ENCODE measurements at regions of chr15 and their contacts with region 1.

Region 1: DNA sequence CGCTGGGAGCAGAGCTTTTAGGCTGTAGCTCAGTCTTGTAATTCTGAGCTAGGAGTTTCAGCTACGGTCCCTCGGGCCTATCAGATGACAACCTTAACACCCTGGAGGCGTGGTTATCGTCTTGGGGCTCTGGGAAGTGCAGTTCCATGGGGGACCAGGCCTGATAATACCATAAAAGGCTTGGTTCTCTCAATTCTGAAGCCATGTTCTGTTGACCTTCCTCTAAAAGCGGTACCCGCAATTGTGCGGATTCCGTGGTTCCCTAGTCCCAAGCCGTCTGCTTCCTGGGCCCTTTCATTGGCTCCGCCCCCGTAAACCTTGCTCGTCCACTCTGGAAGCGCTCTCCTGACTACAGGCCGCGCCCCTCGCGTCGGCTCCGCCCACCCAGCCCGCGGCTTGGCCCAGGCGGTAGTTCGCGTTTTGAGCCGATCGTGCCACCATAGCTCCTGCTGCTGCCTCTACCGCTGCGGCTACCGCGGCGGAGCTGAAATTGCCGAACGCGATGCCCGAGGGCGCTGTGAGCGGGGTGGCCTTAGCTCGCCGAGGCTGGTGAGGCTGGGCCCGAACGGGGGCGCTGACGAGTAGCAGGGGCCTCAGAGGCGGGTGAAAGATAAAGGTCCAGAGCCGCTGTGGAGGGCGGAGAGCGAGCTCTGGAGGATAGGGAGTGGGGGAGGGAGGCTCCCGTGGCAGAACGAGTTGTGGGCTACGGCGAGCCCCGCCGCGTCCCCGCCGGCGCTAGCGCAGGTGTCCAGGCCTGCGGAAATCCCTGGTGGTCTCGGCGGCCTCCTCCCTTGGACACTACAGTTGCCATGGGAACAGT is at the start of gene MAPKBP1:
- DNase-seq: peak; percentile 96 to 99 (median 98)
- ATAC-seq: peak; percentile 97
- H3K4me3 ChIP-seq: peak within 1 kb of the TSS; percentile 93
- H3K4me3 Mint-ChIP-seq: peak within 1 kb of the TSS; percentile 86 to 97 (median 95)
- H3K27ac ChIP-seq: peak within 1 kb of the TSS; percentile 73
- H3K27ac Mint-ChIP-seq: peak within 1 kb of the TSS; percentile 88 to 97 (median 94)
- H3K4me1 ChIP-seq: peaks cover 36% of the 10 kb centered on the region in 2 donors
- H3K4me1 Mint-ChIP-seq: peaks cover 33 to 65% (median 59%) of the 10 kb centered on the region in 7 donors
- H3K27me3 ChIP-seq: no peaks in the 10 kb centered on the region
- H3K27me3 Mint-ChIP-seq: no peaks in the 10 kb centered on the region
- total RNA-seq, gene MAPKBP1: 36.5 to 44.7 (median 41.1) TPM

Region 2: GRCh38 chr15:40906091-40906990 is 867.9 kb before region 1 on chr15:
- CTCF ChIA-PET with region 1: interaction called, 4 read pairs
- POLR2A ChIA-PET with region 1: no interaction called
- intact Hi-C with region 1: loop called in 1 of 2 experiments (anchors 10 kb)
- DNase-seq: peak; percentile 55 to 75 (median 69)
- ATAC-seq: peak; percentile 76
- H3K4me3 ChIP-seq: peak overlapping the region; percentile 66
- H3K4me3 Mint-ChIP-seq: peak overlapping the region; percentile 60 to 88 (median 84)
- H3K27ac ChIP-seq: peak overlapping the region; percentile 55
- H3K27ac Mint-ChIP-seq: peak overlapping the region in 8 of 9 donors; percentile 19 to 93 (median 88)
- H3K4me1 ChIP-seq: peaks cover 6 to 16% of the 10 kb centered on the region in 2 donors
- H3K4me1 Mint-ChIP-seq: peaks cover 29 to 44% (median 34%) of the 10 kb centered on the region in 7 donors
- H3K27me3 ChIP-seq: no peaks in the 10 kb centered on the region
- H3K27me3 Mint-ChIP-seq: no peaks in the 10 kb centered on the region

Region 3: GRCh38 chr15:41544650-41545015 is 229.6 kb before region 1 on chr15:
- CTCF ChIA-PET with region 1: no interaction called
- POLR2A ChIA-PET with region 1: no interaction called
- intact Hi-C with region 1: loop called (anchors 1 kb)
- DNase-seq: peak in 1 of 9 donors; percentile 1
- ATAC-seq: no peak
- H3K4me3 ChIP-seq: peak overlapping the region; percentile 96
- H3K4me3 Mint-ChIP-seq: peak overlapping the region; percentile 92 to 96 (median 94)
- H3K27ac ChIP-seq: peak overlapping the region; percentile 94
- H3K27ac Mint-ChIP-seq: peak overlapping the region in 8 of 9 donors; percentile 62 to 95 (median 92)
- H3K4me1 ChIP-seq: peaks cover 0 to 6% of the 10 kb centered on the region in 2 donors
- H3K4me1 Mint-ChIP-seq: peaks cover 0 to 31% (median 19%) of the 10 kb centered on the region in 7 donors
- H3K27me3 ChIP-seq: no peaks in the 10 kb centered on the region
- H3K27me3 Mint-ChIP-seq: peaks cover 0 to 4% (median 0%) of the 10 kb centered on the region in 5 donors

Region 4: DNA sequence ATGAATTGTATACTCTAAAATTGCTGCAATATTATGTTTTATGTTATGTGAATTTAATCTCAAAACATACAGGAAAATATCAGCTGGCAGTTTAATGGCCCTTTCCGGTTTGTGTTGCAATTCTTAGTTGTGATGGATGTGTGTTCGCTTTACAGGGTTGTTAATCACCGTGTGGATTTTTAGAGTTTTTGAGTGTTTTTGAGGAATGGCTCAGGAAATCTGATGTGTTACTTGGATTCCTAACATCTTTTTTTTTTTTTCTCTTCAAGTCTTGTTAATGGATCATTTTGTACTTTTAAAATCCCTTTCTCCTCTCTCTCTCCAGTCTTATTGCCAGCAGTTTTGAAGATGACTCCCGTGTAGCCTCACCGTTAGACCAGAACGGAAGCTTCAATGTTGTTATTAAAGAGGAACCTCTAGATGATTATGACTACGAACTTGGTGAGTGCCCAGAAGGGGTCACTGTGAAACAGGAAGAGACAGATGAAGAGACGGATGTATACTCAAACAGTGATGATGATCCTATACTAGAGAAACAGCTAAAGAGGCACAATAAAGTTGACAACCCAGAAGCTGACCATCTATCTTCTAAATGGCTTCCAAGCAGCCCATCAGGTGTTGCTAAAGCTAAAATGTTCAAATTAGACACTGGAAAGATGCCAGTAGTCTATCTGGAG is 78.4 kb before region 1 on chr15:
- CTCF ChIA-PET with region 1: interaction called, 6 read pairs
- POLR2A ChIA-PET with region 1: no interaction called
- intact Hi-C with region 1: loop called (anchors 1 to 5 kb)
- DNase-seq: peak in 7 of 9 donors; percentile 22 to 56 (median 44)
- ATAC-seq: peak; percentile 97
- H3K4me3 ChIP-seq: no peak overlapping the region
- H3K4me3 Mint-ChIP-seq: peak overlapping the region; percentile 3 to 69 (median 56)
- H3K27ac ChIP-seq: peak overlapping the region; percentile 42
- H3K27ac Mint-ChIP-seq: peak overlapping the region; percentile 22 to 81 (median 67)
- H3K4me1 ChIP-seq: peaks cover 0 to 10% of the 10 kb centered on the region in 2 donors
- H3K4me1 Mint-ChIP-seq: peaks cover 25 to 74% (median 59%) of the 10 kb centered on the region in 7 donors
- H3K27me3 ChIP-seq: no peaks in the 10 kb centered on the region
- H3K27me3 Mint-ChIP-seq: no peaks in the 10 kb centered on the region

Region 5: GRCh38 chr15:41727143-41727542 is 47.1 kb before region 1 on chr15:
- CTCF ChIA-PET with region 1: no interaction called
- POLR2A ChIA-PET with region 1: no interaction called
- intact Hi-C with region 1: no loop called
- DNase-seq: no peak
- ATAC-seq: no peak
- H3K4me3 ChIP-seq: no peak overlapping the region
- H3K4me3 Mint-ChIP-seq: no peak overlapping the region
- H3K27ac ChIP-seq: no peak overlapping the region
- H3K27ac Mint-ChIP-seq: no peak overlapping the region
- H3K4me1 ChIP-seq: no peaks in the 10 kb centered on the region
- H3K4me1 Mint-ChIP-seq: peaks cover 0 to 24% (median 7%) of the 10 kb centered on the region in 7 donors
- H3K27me3 ChIP-seq: no peaks in the 10 kb centered on the region
- H3K27me3 Mint-ChIP-seq: no peaks in the 10 kb centered on the region

Region 6: DNA sequence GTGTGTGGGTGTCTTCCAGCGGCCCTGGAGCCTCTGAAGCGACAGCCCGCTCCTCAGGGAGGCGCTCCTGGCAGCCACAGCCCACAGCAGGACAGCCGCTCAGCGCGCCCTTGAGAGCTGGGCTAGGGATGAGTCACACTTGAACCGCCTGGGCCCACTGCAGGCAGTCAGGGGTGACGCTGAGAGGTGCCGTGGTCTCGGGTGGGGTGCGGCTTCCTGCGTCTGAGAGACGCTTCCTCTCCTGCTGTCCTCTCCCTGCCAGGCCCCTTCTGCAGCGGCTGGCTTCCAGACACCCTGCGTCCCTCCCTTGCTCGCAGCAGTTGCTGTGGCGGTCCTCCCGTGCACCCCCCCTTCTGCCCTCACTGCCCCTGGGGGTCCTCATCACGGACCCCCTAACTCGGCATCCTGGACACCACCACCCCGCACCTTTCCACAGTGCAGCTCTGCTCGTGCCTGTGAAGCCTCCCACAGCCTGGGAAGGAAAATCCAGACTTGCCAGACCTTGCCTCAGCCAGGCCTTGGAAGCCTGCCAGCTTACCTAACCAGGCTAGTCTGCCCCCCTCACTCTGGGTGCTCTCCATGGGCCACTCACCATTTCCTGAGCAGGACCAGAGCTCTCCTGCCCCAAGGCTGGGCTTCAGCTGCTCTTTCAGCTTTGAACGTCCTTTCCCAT is 120.7 kb after region 1 on chr15:
- CTCF ChIA-PET with region 1: interaction called, 90 read pairs
- POLR2A ChIA-PET with region 1: interaction called, 41 read pairs
- intact Hi-C with region 1: loop called in 1 of 2 experiments (anchors 1 kb)
- DNase-seq: peak; percentile 67 to 88 (median 80)
- ATAC-seq: peak; percentile 98
- H3K4me3 ChIP-seq: peak overlapping the region; percentile 27
- H3K4me3 Mint-ChIP-seq: peak overlapping the region; percentile 37 to 78 (median 70)
- H3K27ac ChIP-seq: peak overlapping the region; percentile 80
- H3K27ac Mint-ChIP-seq: peak overlapping the region; percentile 91 to 99 (median 97)
- H3K4me1 ChIP-seq: peaks cover 30 to 35% of the 10 kb centered on the region in 2 donors
- H3K4me1 Mint-ChIP-seq: peaks cover 14 to 46% (median 38%) of the 10 kb centered on the region in 7 donors
- H3K27me3 ChIP-seq: no peaks in the 10 kb centered on the region
- H3K27me3 Mint-ChIP-seq: no peaks in the 10 kb centered on the region

Region 7: GRCh38 chr15:42056934-42057779 is 282.9 kb after region 1 on chr15:
- CTCF ChIA-PET with region 1: interaction called, 4 read pairs
- POLR2A ChIA-PET with region 1: no interaction called
- intact Hi-C with region 1: loop called in 1 of 2 experiments (anchors 5 kb)
- DNase-seq: peak; percentile 19 to 56 (median 30)
- ATAC-seq: peak; percentile 81
- H3K4me3 ChIP-seq: peak overlapping the region; percentile 23
- H3K4me3 Mint-ChIP-seq: peak overlapping the region; percentile 39 to 79 (median 60)
- H3K27ac ChIP-seq: no peak overlapping the region
- H3K27ac Mint-ChIP-seq: peak overlapping the region in 4 of 9 donors; percentile 24 to 77 (median 35)
- H3K4me1 ChIP-seq: no peaks in the 10 kb centered on the region
- H3K4me1 Mint-ChIP-seq: peaks cover 3 to 17% (median 10%) of the 10 kb centered on the region in 7 donors
- H3K27me3 ChIP-seq: peaks cover 0 to 12% of the 10 kb centered on the region in 2 donors
- H3K27me3 Mint-ChIP-seq: peaks cover 11 to 59% (median 27%) of the 10 kb centered on the region in 5 donors